Aorta (tissue), 5 donors: ENCODE measurements at regions of chr21 and their contacts with region 1.

Region 1: DNA sequence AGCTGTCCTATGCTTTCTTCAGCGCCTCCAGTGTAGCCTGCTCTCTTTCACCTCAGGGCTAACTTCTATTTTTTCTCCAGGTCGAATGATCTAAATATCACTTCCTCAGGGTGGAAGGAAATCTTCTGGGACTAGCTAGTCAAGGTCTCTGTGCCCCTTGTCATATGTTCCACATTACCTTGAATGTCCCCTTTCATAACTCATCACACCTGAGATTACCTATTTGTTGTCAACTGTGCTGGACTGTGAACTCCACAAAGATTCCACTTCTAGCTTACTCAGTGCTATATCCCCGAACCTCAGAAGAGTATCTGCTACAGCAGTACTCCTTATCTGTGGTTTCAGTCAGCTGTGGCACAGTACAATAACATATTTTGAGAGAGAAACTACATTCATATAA is 14.6 kb upstream of the SYNJ1 start:
- DNase-seq: no peak
- ATAC-seq: no peak
- H3K4me3 ChIP-seq: no peak overlapping the region
- H3K27ac ChIP-seq: no peak overlapping the region
- H3K4me1 ChIP-seq: no peaks in the 10 kb centered on the region
- H3K27me3 ChIP-seq: no peaks in the 10 kb centered on the region

Region 2: DNA sequence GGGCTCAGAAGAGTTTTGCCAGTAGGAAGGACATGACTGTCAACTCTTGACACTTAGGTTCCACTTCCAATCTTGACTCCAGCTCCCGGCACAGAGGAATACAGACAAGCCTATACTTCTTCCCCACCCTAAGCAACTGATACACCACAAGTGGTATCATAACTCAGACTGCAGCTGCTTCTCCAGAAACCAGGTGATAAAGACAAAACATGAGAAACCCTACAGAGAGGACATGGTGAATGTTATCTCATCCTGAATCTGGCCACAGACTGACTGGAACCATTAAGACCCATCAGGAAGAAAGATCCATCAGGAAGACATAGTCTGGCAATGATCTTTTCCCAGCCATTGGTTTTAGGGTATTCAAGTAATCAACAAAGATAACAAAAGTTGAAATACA is 15.4 kb after region 1 on chr21:
- intact Hi-C with region 1: loop called in 1 of 2 experiments (anchors 2 kb)
- DNase-seq: no peak
- ATAC-seq: no peak
- H3K4me3 ChIP-seq: no peak overlapping the region
- H3K27ac ChIP-seq: no peak overlapping the region
- H3K4me1 ChIP-seq: no peaks in the 10 kb centered on the region
- H3K27me3 ChIP-seq: no peaks in the 10 kb centered on the region